Activated CD8-positive, alpha-beta T cell treated with anti-CD3 and anti-CD28 coated beads for 36 hours (primary cell): ENCODE measurements at regions of chr5 and their contacts with region 1.

Region 1: DNA sequence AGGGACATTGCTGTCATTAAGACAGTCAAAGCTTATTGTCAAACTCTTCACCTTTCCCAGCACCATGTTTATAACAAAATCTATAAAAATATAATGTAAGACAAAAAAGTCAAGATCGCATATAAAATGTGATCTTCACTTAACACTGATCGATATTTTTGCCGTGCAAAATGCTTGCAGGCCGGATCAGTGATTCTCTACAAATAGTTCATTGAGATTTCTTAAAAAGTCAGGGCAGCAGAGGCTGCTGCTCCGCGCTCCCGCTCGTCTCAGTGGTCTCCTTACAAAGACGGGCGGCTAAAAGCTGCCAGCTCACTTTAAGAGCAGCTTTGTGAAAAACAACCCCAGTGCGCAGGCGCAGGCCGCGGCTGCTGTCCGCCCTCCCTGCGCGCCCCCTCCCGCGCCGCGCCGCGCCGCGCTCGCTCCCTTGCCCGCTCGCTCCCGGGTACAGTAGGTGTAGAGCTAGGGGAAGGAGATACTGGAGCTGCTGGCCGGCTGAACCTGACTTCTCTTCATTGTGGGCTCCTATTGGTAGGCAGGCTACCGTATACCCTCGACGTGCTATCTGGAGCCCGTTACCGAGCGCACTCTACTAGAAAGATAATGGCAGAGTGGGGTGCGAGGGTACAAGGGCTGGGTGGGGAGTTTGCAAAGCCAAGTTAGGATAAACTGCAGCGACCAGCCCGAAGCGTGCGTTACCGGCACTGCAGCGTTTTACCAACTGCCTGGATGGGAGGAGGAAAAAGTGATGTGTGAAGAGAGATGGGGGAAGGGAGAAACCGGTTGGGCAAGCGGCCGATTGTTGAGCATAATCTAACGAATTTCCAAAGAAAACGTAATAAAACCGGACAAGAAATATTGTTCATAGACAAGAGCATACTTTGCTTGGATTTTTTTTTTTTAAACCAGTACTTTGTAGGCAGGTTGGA is at the start of gene ARRDC3:
- DNase-seq: peak; percentile 96
- ATAC-seq: peak; percentile 63
- H3K4me3 Mint-ChIP-seq: peak within 1 kb of the TSS; percentile 93
- H3K27ac Mint-ChIP-seq: peak within 1 kb of the TSS; percentile 98
- H3K4me1 Mint-ChIP-seq: peaks cover 14% of the 10 kb centered on the region
- H3K27me3 Mint-ChIP-seq: no peaks in the 10 kb centered on the region
- CTCF ChIP-seq: no peak
- total RNA-seq, gene ARRDC3: 35.4 to 39.2 TPM

Region 2: GRCh38 chr5:90866333-90866732 is 517.0 kb before region 1 on chr5:
- CTCF ChIA-PET with region 1: interaction called, 37 read pairs
- POLR2A ChIA-PET with region 1: no interaction called
- intact Hi-C with region 1: loop called (anchors 10 kb)
- DNase-seq: no peak
- ATAC-seq: peak; percentile 49
- H3K4me3 Mint-ChIP-seq: no peak overlapping the region
- H3K27ac Mint-ChIP-seq: no peak overlapping the region
- H3K4me1 Mint-ChIP-seq: peaks cover 13% of the 10 kb centered on the region
- H3K27me3 Mint-ChIP-seq: peaks cover 6% of the 10 kb centered on the region
- CTCF ChIP-seq: peak; percentile 52

Region 3: GRCh38 chr5:91162534-91163381 is 220.5 kb before region 1 on chr5:
- CTCF ChIA-PET with region 1: interaction called, 5 read pairs
- POLR2A ChIA-PET with region 1: interaction called, 5 read pairs
- intact Hi-C with region 1: loop called (anchors 5 kb)
- DNase-seq: peak; percentile 86
- ATAC-seq: peak; percentile 98
- H3K4me3 Mint-ChIP-seq: peak overlapping the region; percentile 6
- H3K27ac Mint-ChIP-seq: peak overlapping the region; percentile 55
- H3K4me1 Mint-ChIP-seq: peaks cover 21% of the 10 kb centered on the region
- H3K27me3 Mint-ChIP-seq: no peaks in the 10 kb centered on the region
- CTCF ChIP-seq: no peak

Region 4: GRCh38 chr5:91219803-91220371 is 163.4 kb before region 1 on chr5:
- CTCF ChIA-PET with region 1: interaction called, 114 read pairs
- POLR2A ChIA-PET with region 1: interaction called, 7 read pairs
- intact Hi-C with region 1: no loop called
- DNase-seq: peak; percentile 62
- ATAC-seq: peak; percentile 47
- H3K4me3 Mint-ChIP-seq: no peak overlapping the region
- H3K27ac Mint-ChIP-seq: no peak overlapping the region
- H3K4me1 Mint-ChIP-seq: no peaks in the 10 kb centered on the region
- H3K27me3 Mint-ChIP-seq: no peaks in the 10 kb centered on the region
- CTCF ChIP-seq: peak; percentile 58

Region 5: DNA sequence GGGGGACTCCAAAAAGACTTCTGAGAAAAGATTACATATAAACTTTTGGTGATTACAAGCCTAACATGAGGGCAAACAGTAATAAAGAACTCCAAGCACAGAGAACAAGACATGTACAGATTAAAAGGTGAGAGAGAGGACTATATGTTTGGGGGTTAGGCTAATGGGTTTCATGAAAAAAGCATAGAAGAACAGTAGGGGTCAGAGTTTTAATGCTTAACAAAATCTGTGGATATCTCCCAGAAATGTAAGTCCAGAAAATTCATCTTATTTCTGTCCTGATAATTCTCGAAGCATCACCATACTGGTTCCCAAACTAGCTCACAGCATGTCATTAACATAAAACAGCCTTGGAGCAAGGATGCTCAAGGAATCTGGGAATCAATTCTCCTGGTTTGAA is 137.4 kb before region 1 on chr5:
- CTCF ChIA-PET with region 1: interaction called, 14 read pairs
- POLR2A ChIA-PET with region 1: interaction called, 3 read pairs
- intact Hi-C with region 1: no loop called
- DNase-seq: no peak
- ATAC-seq: no peak
- H3K4me3 Mint-ChIP-seq: no peak overlapping the region
- H3K27ac Mint-ChIP-seq: no peak overlapping the region
- H3K4me1 Mint-ChIP-seq: no peaks in the 10 kb centered on the region
- H3K27me3 Mint-ChIP-seq: no peaks in the 10 kb centered on the region
- CTCF ChIP-seq: no peak

Region 6: GRCh38 chr5:91280362-91281269 is 102.7 kb before region 1 on chr5:
- CTCF ChIA-PET with region 1: interaction called, 25 read pairs
- POLR2A ChIA-PET with region 1: interaction called, 40 read pairs
- intact Hi-C with region 1: loop called (anchors 2 kb)
- DNase-seq: peak; percentile 93
- ATAC-seq: peak; percentile 81
- H3K4me3 Mint-ChIP-seq: peak overlapping the region; percentile 85
- H3K27ac Mint-ChIP-seq: peak overlapping the region; percentile 98
- H3K4me1 Mint-ChIP-seq: peaks cover 47% of the 10 kb centered on the region
- H3K27me3 Mint-ChIP-seq: no peaks in the 10 kb centered on the region
- CTCF ChIP-seq: no peak

Region 7: DNA sequence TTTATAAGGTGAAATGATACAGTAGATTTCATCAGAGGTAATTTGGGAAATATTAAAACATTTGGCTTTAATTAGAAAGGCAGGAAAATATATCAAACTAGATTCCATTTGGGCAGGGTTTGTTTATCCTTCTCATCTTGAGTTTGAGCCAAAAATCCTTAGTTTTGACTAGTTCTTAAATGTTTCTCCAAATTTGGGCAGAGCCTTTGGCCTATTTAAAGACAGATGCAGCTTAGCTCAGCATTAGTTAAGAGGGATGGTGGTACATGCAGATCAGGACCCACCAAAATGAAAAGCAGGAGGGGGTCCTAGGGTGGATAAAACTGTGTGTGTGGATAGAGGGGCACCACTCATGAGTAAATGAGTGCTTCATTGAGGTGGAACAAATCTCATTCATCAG is 20.1 kb after region 1 on chr5:
- CTCF ChIA-PET with region 1: interaction called, 22 read pairs
- POLR2A ChIA-PET with region 1: interaction called, 3 read pairs
- intact Hi-C with region 1: no loop called
- DNase-seq: no peak
- ATAC-seq: no peak
- H3K4me3 Mint-ChIP-seq: no peak overlapping the region
- H3K27ac Mint-ChIP-seq: no peak overlapping the region
- H3K4me1 Mint-ChIP-seq: no peaks in the 10 kb centered on the region
- H3K27me3 Mint-ChIP-seq: no peaks in the 10 kb centered on the region
- CTCF ChIP-seq: no peak

Region 8: GRCh38 chr5:91486638-91487037 is 103.3 kb after region 1 on chr5:
- CTCF ChIA-PET with region 1: no interaction called
- POLR2A ChIA-PET with region 1: no interaction called
- intact Hi-C with region 1: no loop called
- DNase-seq: no peak
- ATAC-seq: no peak
- H3K4me3 Mint-ChIP-seq: no peak overlapping the region
- H3K27ac Mint-ChIP-seq: no peak overlapping the region
- H3K4me1 Mint-ChIP-seq: peaks cover 5% of the 10 kb centered on the region
- H3K27me3 Mint-ChIP-seq: no peaks in the 10 kb centered on the region
- CTCF ChIP-seq: no peak